Sciatic nerve (tissue), 2 donors: ENCODE measurements at regions of chr1 and their contacts with region 1.

Region 1: DNA sequence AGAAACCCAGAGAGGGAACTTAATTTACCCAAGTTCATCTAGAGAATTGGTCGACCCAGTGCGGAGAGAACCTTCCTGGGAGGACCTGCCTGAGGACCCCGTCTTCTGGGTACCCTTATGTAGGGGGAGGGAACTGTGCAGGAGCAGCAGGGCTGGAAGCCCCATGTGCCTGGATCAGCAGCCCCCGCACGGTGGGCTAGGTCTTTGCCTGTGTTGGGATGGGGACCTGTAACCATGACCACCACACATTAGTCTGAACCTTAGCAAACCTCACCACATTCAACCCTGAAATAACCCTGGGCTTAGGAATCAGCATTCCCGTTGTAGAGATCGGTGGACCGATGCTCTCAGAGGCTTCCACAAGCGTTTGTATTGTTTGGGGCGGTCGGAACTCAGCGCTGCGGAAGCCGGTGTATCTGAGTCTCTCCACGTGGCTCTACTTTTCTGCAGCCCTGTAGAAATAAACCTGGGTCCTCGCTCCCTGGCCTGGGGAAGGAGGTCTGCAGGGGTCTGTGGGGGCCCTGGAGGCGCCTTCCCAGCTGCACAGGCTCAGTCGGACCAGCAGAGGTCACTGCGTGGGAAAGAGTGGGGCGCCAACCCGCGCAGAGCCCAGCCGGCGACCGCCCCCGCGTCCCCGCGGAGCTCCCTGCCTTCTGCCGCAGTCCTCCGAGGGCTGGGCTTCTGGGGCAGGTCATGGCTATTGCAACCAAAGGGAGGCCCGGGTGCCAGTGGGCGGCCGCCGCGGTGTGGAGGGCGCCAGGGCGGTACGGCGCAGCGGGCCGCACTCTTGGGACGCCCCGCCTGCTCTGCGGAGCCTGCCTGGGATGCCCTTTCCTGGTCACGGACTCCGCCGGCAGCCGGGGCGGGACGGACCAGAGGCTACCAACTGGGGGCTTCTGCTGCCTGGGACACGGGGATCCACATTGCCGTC is 36.2 kb upstream of the KCNA10 start:
- DNase-seq: peak; percentile 76
- ATAC-seq: peak; percentile 60

Region 2: DNA sequence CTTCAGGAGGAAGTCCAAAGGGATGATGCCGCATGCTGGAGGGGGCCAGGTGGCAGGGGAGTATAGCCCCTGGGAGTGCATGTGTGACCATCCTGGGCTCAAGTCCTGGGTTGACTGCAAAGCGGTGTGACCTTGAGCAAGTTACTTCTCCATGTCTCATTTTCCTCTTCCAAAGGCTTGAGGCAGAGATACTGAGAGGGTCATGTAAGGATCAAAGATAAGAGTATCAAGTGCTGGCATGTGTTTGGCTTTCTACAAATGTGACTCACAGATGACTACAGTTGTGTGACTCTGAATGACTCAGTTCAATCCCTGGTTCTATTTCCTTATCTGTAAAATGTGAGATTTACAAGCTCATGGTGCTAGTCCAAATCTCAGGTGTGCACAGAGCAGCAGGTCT is 78.1 kb before region 1 on chr1:
- intact Hi-C with region 1: no loop called
- DNase-seq: no peak
- ATAC-seq: no peak

Region 3: GRCh38 chr1:110612065-110612751 is 57.1 kb after region 1 on chr1:
- intact Hi-C with region 1: loop called (anchors 5 kb)
- DNase-seq: no peak
- ATAC-seq: no peak

Region 4: DNA sequence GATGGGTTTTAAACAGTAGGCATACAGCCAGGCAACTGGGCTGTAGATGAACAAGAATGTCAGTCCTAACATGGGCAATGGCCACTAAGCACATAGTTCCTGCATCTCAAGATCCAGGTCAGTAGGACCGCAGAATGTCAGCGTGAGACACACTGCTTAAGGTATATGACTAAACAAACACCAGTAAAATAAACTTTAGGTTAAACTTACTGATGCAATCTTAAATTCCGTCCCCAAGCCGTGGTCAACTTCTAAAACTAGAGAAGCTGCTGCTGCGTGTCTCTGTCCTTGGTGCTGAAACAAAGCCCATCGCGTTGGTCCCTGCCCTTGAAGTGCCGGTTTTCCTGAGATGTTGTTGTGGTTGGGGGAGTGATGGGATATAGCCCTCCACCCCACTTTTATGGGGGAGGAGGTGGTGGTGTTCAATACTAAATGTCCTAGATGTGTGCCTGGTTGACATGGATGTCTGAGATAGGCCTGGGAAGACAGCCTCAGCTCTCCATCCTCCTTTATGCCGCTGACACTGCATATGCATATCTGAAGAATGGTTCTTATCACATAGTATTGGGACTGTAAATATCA is 191.5 kb after region 1 on chr1:
- intact Hi-C with region 1: no loop called
- DNase-seq: peak; percentile 63
- ATAC-seq: no peak